Astrocyte of the spinal cord (primary cell): ENCODE measurements at regions of chr4 and their contacts with region 1.

Region 1: GRCh38 chr4:38663801-38664705 is at the start of gene KLF3:
- DNase-seq: peak; percentile 93
- H3K4me3 ChIP-seq: peak within 1 kb of the TSS; percentile 90
- CTCF ChIP-seq: no peak

Region 2: GRCh38 chr4:38319456-38320342 is 344.4 kb before region 1 on chr4:
- in situ Hi-C with region 1: loop called (anchors 25 kb)
- DNase-seq: peak; percentile 91
- H3K4me3 ChIP-seq: no peak overlapping the region
- CTCF ChIP-seq: peak; percentile 100

Region 3: GRCh38 chr4:39078829-39079228 is 414.8 kb after region 1 on chr4:
- in situ Hi-C with region 1: no loop called
- DNase-seq: no peak
- H3K4me3 ChIP-seq: no peak overlapping the region
- CTCF ChIP-seq: no peak